ENCODE measurements at regions of chr12 and their contacts with region 1.

Region 1: GRCh38 chr12:42819846-42820245 is 230.3 kb upstream of the PRICKLE1 start:
- DNase-seq: no peak
- H3K4me3 ChIP-seq: no peak overlapping the region
- H3K27ac ChIP-seq: no peak overlapping the region
- H3K4me1 ChIP-seq: no peaks in the 10 kb centered on the region
- H3K27me3 ChIP-seq: no peaks in the 10 kb centered on the region
- CTCF ChIP-seq: no peak

Region 2: GRCh38 chr12:42767326-42767954 is 52.4 kb before region 1 on chr12:
- CTCF ChIA-PET with region 1: no interaction called
- dilution Hi-C with region 1: no loop called
- in situ Hi-C with region 1: no loop called
- intact Hi-C with region 1: no loop called
- DNase-seq: no peak
- H3K4me3 ChIP-seq: no peak overlapping the region
- H3K27ac ChIP-seq: no peak overlapping the region
- H3K4me1 ChIP-seq: no peaks in the 10 kb centered on the region
- H3K27me3 ChIP-seq: no peaks in the 10 kb centered on the region
- CTCF ChIP-seq: no peak

Region 3: DNA sequence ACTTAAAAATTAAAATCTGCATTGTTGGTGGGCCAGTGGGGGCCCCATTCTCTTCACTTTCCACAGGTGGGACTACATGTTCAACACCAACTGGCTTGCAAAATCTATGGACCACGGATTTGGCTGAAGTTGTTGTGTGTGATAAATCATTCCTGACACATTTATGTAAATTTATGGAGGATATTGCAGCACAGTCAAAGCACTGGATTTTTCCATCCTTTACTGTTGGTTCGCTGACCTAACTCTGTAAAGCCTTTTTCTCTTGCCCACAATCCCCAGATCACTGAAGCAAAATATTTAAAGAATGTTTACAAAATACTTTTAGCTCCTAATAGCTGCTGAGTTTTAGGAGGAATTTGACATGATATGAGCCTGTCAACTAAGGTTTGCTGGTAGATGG is 10.6 kb before region 1 on chr12:
- CTCF ChIA-PET with region 1: interaction called, 14 read pairs
- dilution Hi-C with region 1: no loop called
- in situ Hi-C with region 1: no loop called
- intact Hi-C with region 1: no loop called
- DNase-seq: no peak
- H3K4me3 ChIP-seq: no peak overlapping the region
- H3K27ac ChIP-seq: no peak overlapping the region
- H3K4me1 ChIP-seq: no peaks in the 10 kb centered on the region
- H3K27me3 ChIP-seq: no peaks in the 10 kb centered on the region
- CTCF ChIP-seq: no peak

Region 4: GRCh38 chr12:43812906-43813305 is 993.1 kb after region 1 on chr12:
- CTCF ChIA-PET with region 1: no interaction called
- dilution Hi-C with region 1: no loop called
- in situ Hi-C with region 1: no loop called
- intact Hi-C with region 1: no loop called
- DNase-seq: peak; percentile 80
- H3K4me3 ChIP-seq: no peak overlapping the region
- H3K27ac ChIP-seq: no peak overlapping the region
- H3K4me1 ChIP-seq: peaks cover 11% of the 10 kb centered on the region
- H3K27me3 ChIP-seq: no peaks in the 10 kb centered on the region
- CTCF ChIP-seq: no peak

Measured in mammary epithelial cell (primary cell).